ENCODE measurements at regions of chr5 and their contacts with region 1.

Region 1: DNA sequence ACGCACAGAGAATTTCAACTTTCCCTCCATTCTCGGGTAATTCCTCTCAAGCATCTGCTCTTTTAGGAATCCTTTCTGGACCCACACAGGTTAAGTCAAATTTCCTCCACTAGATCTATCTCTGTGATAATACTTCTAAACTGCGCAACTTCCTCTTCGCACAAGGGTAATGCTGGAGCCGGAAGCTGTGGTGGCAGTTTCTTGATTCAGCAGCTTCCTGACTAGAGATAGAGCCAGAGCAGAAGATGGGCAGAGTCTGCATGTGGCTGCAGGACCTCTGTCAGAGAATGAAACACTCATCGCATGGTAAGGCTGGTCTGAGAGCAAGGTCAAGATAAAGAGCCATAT is 11.1 kb upstream of the CDC42SE2 start:
- DNase-seq: peak; percentile 90
- H3K4me3 Mint-ChIP-seq: peak overlapping the region; percentile 93
- H3K27ac Mint-ChIP-seq: peak overlapping the region; percentile 99
- H3K4me1 Mint-ChIP-seq: peaks cover 69% of the 10 kb centered on the region
- H3K27me3 Mint-ChIP-seq: no peaks in the 10 kb centered on the region

Region 2: GRCh38 chr5:131165119-131165727 is 87.6 kb before region 1 on chr5 and contains the start of gene HINT1:
- CTCF ChIA-PET with region 1: interaction called, 4 read pairs
- POLR2A ChIA-PET with region 1: interaction called, 128 read pairs
- DNase-seq: peak; percentile 94
- H3K4me3 Mint-ChIP-seq: peak within 1 kb of the TSS; percentile 93
- H3K27ac Mint-ChIP-seq: peak within 1 kb of the TSS; percentile 97
- H3K4me1 Mint-ChIP-seq: peaks cover 59% of the 10 kb centered on the region
- H3K27me3 Mint-ChIP-seq: no peaks in the 10 kb centered on the region
- total RNA-seq, gene HINT1: 323 to 329 TPM

Region 3: GRCh38 chr5:131170540-131171275 is 82.1 kb before region 1 on chr5 and contains the start of gene LYRM7:
- CTCF ChIA-PET with region 1: interaction called, 3 read pairs
- POLR2A ChIA-PET with region 1: interaction called, 128 read pairs
- DNase-seq: peak; percentile 98
- H3K4me3 Mint-ChIP-seq: peak within 1 kb of the TSS; percentile 95
- H3K27ac Mint-ChIP-seq: peak within 1 kb of the TSS; percentile 85
- H3K4me1 Mint-ChIP-seq: peaks cover 53% of the 10 kb centered on the region
- H3K27me3 Mint-ChIP-seq: no peaks in the 10 kb centered on the region
- total RNA-seq, gene LYRM7: 9.8 to 11.9 TPM

Region 4: DNA sequence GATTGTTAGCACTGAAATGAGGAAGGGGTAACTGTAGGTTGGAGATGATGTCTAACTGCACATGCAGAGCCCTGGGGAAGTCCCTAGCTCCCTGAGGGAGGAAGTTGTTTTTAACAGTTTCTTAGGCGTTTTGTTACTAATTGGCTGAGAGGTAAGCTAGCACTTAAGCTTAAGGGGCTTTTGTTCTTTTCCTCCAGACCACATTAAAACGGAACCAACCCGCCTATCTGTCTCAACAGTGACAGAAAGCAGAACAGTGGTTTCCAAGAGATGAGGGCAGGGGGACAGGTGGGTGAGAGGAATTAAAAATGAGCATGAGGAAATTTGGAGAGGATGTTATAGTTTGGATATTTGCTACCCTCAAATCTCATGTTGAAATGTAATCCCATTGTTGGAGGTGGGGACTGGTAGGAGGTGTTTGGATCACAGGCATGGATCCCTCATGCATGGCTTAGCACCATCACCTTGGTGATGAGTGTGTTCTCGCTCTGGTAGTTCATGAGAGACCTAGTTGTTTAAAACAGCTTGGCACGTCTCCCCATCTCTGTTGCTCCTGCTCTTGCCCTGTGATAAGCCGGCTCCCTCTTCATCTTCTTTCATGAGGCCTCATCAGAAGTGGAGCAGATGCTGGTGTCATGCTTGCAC is 43.2 kb before region 1 on chr5:
- CTCF ChIA-PET with region 1: no interaction called
- POLR2A ChIA-PET with region 1: interaction called, 30 read pairs
- DNase-seq: peak; percentile 31
- H3K4me3 Mint-ChIP-seq: peak overlapping the region; percentile 65
- H3K27ac Mint-ChIP-seq: peak overlapping the region; percentile 91
- H3K4me1 Mint-ChIP-seq: peaks cover 49% of the 10 kb centered on the region
- H3K27me3 Mint-ChIP-seq: no peaks in the 10 kb centered on the region

Region 5: DNA sequence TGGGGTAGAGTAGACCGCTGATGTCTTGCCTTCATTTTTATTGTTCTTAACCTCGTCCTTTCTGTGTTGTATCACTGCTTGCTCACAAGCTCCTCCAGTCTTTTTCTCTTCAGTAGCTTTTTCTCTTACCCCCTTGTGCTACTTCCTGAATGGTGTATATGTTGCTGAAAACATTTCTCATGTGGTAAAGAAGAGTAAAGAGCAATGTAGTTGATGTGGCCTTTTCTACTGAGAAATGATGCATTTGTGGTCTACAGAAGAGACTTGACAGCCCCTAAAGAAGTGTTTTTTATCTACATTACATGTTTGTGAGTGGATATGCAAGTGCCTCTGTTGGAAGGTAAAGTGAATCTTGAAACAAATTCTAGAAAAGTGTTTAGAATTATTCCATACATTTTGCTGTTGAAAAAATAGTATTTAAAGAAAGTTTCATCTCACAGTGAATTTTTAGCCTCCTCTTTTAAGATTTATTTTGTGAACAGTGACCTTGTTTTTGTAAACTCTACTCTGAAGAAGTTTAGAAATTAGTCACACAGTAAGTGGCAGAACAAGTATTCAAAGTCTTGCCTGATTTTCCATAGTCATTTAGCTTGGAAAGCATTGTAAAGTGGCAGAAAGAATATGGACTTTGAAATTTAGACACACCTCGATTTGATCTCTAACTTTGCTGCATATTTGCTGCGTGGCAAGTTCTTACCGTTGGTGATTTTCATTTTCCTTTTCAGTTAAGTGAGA is 28.5 kb after region 1 on chr5:
- CTCF ChIA-PET with region 1: interaction called, 3 read pairs
- POLR2A ChIA-PET with region 1: interaction called, 26 read pairs
- DNase-seq: no peak
- H3K4me3 Mint-ChIP-seq: peak overlapping the region; percentile 61
- H3K27ac Mint-ChIP-seq: peak overlapping the region; percentile 87
- H3K4me1 Mint-ChIP-seq: peaks cover 90% of the 10 kb centered on the region
- H3K27me3 Mint-ChIP-seq: no peaks in the 10 kb centered on the region

Region 6: GRCh38 chr5:131303537-131303936 is 50.7 kb after region 1 on chr5:
- CTCF ChIA-PET with region 1: no interaction called
- POLR2A ChIA-PET with region 1: no interaction called
- DNase-seq: no peak
- H3K4me3 Mint-ChIP-seq: no peak overlapping the region
- H3K27ac Mint-ChIP-seq: no peak overlapping the region
- H3K4me1 Mint-ChIP-seq: peaks cover 61% of the 10 kb centered on the region
- H3K27me3 Mint-ChIP-seq: no peaks in the 10 kb centered on the region

Region 7: GRCh38 chr5:131394128-131394527 is 141.3 kb after region 1 on chr5:
- CTCF ChIA-PET with region 1: no interaction called
- POLR2A ChIA-PET with region 1: interaction called, 11 read pairs
- DNase-seq: peak; percentile 50
- H3K4me3 Mint-ChIP-seq: peak overlapping the region; percentile 45
- H3K27ac Mint-ChIP-seq: peak overlapping the region; percentile 83
- H3K4me1 Mint-ChIP-seq: peaks cover 75% of the 10 kb centered on the region
- H3K27me3 Mint-ChIP-seq: no peaks in the 10 kb centered on the region

Measured in activated CD4-positive, alpha-beta memory T cell treated with anti-CD3 and anti-CD28 coated beads, Interleukin-2, amount 10 ng/mL, durations not matched to agents 7 days and 5 days (primary cell).